IMR-90 (cell line): ENCODE measurements at regions of chr3 and their contacts with region 1.

Region 1: DNA sequence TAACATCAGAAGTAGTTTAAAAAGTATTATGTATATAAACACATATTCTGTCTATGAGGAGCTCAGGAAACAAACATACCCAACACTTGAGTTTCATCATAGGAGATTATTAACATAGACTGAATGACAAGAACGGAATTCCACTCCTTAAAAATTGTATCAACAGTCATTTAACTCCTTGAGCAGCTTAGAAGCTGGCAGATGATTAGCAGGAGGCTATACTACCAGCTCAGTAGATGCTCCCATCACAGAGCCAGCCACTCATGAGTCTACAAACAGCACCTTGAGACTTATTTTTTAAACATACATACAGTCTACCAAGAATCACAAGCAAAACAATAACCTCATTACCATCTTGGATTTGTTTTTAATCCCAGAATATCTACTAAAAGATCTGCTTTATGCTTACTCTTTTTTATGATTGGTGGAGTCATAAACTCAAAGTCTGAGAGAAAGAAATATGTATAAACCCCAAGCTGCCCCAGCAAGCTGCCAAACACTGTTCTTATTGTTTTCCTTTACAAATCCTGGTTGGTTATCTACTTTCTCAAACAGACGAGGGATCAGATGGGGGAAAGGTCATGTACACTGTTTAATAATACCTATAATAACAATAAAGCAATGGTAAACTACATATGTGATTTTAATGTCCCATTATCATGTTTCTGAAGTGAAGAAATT is 59.5 kb downstream of the CBLB start:
- DNase-seq: no peak
- ATAC-seq: peak; percentile 49
- H3K4me3 ChIP-seq: no peak overlapping the region
- H3K27ac ChIP-seq: no peak overlapping the region
- H3K4me1 ChIP-seq: peaks cover 2% of the 10 kb centered on the region; the same call in 1 of the 2 replicates
- H3K27me3 ChIP-seq: no peaks in the 10 kb centered on the region
- CTCF ChIP-seq: no peak
- POLR2A ChIP-seq: no peak
- RAD21 ChIP-seq: no peak

Region 2: GRCh38 chr3:105791919-105792786 is 17.2 kb before region 1 on chr3:
- CTCF ChIA-PET with region 1: no interaction called
- POLR2A ChIA-PET with region 1: no interaction called
- dilution Hi-C with region 1: no loop called
- in situ Hi-C with region 1: no loop called
- intact Hi-C with region 1: loop called (anchors 2 kb)
- DNase-seq: peak; percentile 96
- ATAC-seq: peak; percentile 85
- H3K4me3 ChIP-seq: no peak overlapping the region
- H3K27ac ChIP-seq: no peak overlapping the region
- H3K4me1 ChIP-seq: peaks cover 10% of the 10 kb centered on the region
- H3K27me3 ChIP-seq: no peaks in the 10 kb centered on the region
- CTCF ChIP-seq: no peak
- POLR2A ChIP-seq: no peak
- RAD21 ChIP-seq: 0 out of 2 replicates have a peak, but pooled peaks have one; percentile 3

Region 3: GRCh38 chr3:105823149-105823869 is 14.0 kb after region 1 on chr3:
- CTCF ChIA-PET with region 1: interaction called, 5 read pairs
- POLR2A ChIA-PET with region 1: no interaction called
- dilution Hi-C with region 1: no loop called
- in situ Hi-C with region 1: no loop called
- intact Hi-C with region 1: loop called (anchors 2 kb)
- DNase-seq: peak; percentile 98
- ATAC-seq: peak; percentile 92
- H3K4me3 ChIP-seq: no peak overlapping the region
- H3K27ac ChIP-seq: peak overlapping the region; percentile 74
- H3K4me1 ChIP-seq: peaks cover 15% of the 10 kb centered on the region
- H3K27me3 ChIP-seq: no peaks in the 10 kb centered on the region
- CTCF ChIP-seq: no peak
- POLR2A ChIP-seq: no peak
- RAD21 ChIP-seq: peak; percentile 35; the same call in 1 of the 2 replicates